Gastrocnemius medialis (tissue), 4 donors: ENCODE measurements at regions of chrX and their contacts with region 1.

Region 1: GRCh38 chrX:154490414-154491083 is at the start of gene SLC10A3:
- DNase-seq: peak; percentile 84 to 91
- ATAC-seq: peak; percentile 79
- H3K4me3 ChIP-seq: peak within 1 kb of the TSS; percentile 60 to 80 (median 67)
- H3K27ac ChIP-seq: peak within 1 kb of the TSS; percentile 89 to 95 (median 92)
- H3K4me1 ChIP-seq: peaks cover 2 to 13% of the 10 kb centered on the region in 2 donors
- H3K27me3 ChIP-seq: no peaks in the 10 kb centered on the region
- CTCF ChIP-seq: no peak
- POLR2A ChIP-seq: peak; percentile 93
- total RNA-seq, gene SLC10A3: 11.8 to 33.3 (median 21.0) TPM

Region 2: DNA sequence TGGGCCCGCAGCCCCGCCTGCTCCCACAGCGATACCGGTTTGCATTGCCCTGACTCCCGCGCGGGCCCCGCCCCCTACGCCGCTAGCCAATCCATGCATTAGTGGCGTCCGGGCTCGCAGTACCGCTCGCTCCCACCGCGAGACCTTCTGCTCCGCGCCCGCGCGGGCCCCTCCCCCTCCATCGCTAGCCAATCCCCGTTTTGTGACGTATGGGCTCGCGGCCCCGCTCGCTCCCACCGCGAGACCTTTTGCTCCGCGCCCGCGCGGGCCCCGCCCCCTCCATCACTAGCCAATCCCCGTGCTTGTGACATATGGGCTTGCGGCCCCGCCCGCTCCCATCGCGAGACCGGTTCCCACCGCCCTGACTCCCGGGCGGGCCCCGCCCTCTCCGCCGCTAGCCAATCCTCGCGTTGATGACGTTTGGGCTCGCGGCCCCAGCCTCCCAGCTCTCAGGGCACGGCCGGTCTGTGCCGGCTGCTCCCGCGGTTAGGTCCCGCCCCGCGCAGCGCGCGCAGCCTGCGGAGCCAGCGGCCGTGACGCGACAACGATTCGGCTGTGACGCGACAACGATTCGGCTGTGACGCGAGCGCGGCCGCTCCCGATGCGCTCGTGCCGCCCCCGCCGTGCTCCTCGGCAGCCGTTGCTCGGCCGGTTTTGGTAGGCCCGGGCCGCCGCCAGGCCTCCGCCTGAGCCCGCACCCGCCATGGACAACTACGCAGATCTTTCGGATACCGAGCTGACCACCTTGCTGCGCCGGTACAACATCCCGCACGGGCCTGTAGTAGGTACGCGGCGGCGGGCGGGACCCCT is 111.6 kb before region 1 on chrX and contains the start of gene EMD:
- in situ Hi-C with region 1: no loop called
- intact Hi-C with region 1: no loop called
- DNase-seq: peak; percentile 95 to 98
- ATAC-seq: peak; percentile 79 to 84
- H3K4me3 ChIP-seq: peak within 1 kb of the TSS; percentile 67 to 84 (median 69)
- H3K27ac ChIP-seq: peak within 1 kb of the TSS; percentile 87 to 99 (median 96)
- H3K4me1 ChIP-seq: peaks cover 5 to 13% of the 10 kb centered on the region in 2 donors
- H3K27me3 ChIP-seq: no peaks in the 10 kb centered on the region
- CTCF ChIP-seq: peak in 1 of 5 experiments; percentile 5
- POLR2A ChIP-seq: peak; percentile 89 to 93
- total RNA-seq, gene EMD: 36.2 to 61.5 (median 53.2) TPM

Region 3: GRCh38 chrX:154397819-154398724 is 92.5 kb before region 1 on chrX and contains the start of gene RPL10:
- in situ Hi-C with region 1: no loop called
- intact Hi-C with region 1: loop called (anchors 5 kb)
- DNase-seq: peak; percentile 92 to 96
- ATAC-seq: peak; percentile 83 to 91
- H3K4me3 ChIP-seq: peak within 1 kb of the TSS; percentile 68 to 85 (median 80)
- H3K27ac ChIP-seq: peak within 1 kb of the TSS; percentile 93 to 99 (median 98)
- H3K4me1 ChIP-seq: peaks cover 10 to 18% of the 10 kb centered on the region in 2 donors
- H3K27me3 ChIP-seq: no peaks in the 10 kb centered on the region
- CTCF ChIP-seq: no peak
- POLR2A ChIP-seq: peak; percentile 87 to 91
- total RNA-seq, gene RPL10: 3,899 to 6,066 (median 5,720) TPM

Region 4: GRCh38 chrX:154411322-154411980 is 79.1 kb before region 1 on chrX and contains the start of gene TAFAZZIN:
- in situ Hi-C with region 1: no loop called
- intact Hi-C with region 1: loop called (anchors 5 kb)
- DNase-seq: peak; percentile 59 to 72
- ATAC-seq: peak; percentile 44 to 50
- H3K4me3 ChIP-seq: peak within 1 kb of the TSS; percentile 67 to 90 (median 78)
- H3K27ac ChIP-seq: peak within 1 kb of the TSS; percentile 91 to 98 (median 98)
- H3K4me1 ChIP-seq: peaks cover 12 to 32% of the 10 kb centered on the region in 2 donors
- H3K27me3 ChIP-seq: no peaks in the 10 kb centered on the region
- CTCF ChIP-seq: no peak
- POLR2A ChIP-seq: peak; percentile 71 to 82
- total RNA-seq, gene TAFAZZIN: 17.6 to 28.3 (median 20.1) TPM

Region 5: DNA sequence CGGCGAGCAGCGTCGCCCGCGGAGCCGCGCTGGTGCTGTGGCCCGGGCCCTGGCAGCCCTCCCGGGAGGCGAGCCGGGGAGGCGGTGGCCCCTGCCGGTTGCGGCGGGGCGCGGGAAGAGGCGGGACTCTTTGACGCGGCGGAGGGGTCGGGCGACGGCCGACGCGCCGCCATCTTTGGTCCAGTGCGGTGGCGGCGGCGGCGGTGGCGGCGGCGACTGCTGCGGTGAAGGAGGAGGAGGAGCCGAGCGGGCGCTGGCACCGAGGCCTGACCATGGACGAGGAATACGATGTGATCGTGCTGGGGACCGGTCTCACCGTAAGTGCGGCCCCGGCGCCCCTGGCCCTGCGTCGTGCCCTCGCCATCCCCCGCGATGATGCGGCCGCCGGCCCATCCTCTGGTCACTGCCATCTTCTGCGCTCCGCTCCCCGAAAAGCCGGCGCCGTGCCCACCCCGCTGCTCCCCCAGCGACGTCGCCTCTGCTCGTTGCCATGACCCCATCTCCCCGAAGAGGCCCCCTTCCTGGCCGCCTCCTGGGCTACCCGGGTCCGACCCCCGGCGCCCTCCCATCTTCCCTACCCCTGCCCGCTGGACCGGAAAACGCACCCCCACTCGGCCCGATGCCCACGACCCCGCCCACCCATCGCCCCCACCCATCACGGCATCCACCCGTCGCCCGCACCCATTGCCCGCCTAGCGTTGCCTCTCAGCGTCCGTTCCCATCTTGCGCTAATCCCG is 53.4 kb before region 1 on chrX and contains the start of gene GDI1:
- in situ Hi-C with region 1: no loop called
- intact Hi-C with region 1: loop called (anchors 2 kb)
- DNase-seq: peak in 1 of 2 donors; percentile 36
- ATAC-seq: peak; percentile 72 to 75
- H3K4me3 ChIP-seq: peak within 1 kb of the TSS; percentile 64 to 84 (median 66)
- H3K27ac ChIP-seq: peak within 1 kb of the TSS; percentile 79 to 88 (median 82)
- H3K4me1 ChIP-seq: peaks cover 0 to 5% of the 10 kb centered on the region in 2 donors
- H3K27me3 ChIP-seq: no peaks in the 10 kb centered on the region
- CTCF ChIP-seq: no peak
- POLR2A ChIP-seq: peak; percentile 49 to 62
- total RNA-seq, gene GDI1: 19.8 to 54.5 (median 39.0) TPM

Region 6: GRCh38 chrX:154515878-154516655 is 25.5 kb after region 1 on chrX and contains the start of gene FAM3A:
- in situ Hi-C with region 1: no loop called
- intact Hi-C with region 1: loop called (anchors 1 kb)
- DNase-seq: peak; percentile 93
- ATAC-seq: peak; percentile 86 to 92
- H3K4me3 ChIP-seq: peak within 1 kb of the TSS; percentile 68 to 89 (median 72)
- H3K27ac ChIP-seq: peak within 1 kb of the TSS; percentile 88 to 96 (median 95)
- H3K4me1 ChIP-seq: peaks cover 0 to 12% of the 10 kb centered on the region in 2 donors
- H3K27me3 ChIP-seq: no peaks in the 10 kb centered on the region
- CTCF ChIP-seq: no peak
- POLR2A ChIP-seq: peak; percentile 88 to 89
- total RNA-seq, gene FAM3A: 28.3 to 44.5 (median 37.8) TPM

Region 7: DNA sequence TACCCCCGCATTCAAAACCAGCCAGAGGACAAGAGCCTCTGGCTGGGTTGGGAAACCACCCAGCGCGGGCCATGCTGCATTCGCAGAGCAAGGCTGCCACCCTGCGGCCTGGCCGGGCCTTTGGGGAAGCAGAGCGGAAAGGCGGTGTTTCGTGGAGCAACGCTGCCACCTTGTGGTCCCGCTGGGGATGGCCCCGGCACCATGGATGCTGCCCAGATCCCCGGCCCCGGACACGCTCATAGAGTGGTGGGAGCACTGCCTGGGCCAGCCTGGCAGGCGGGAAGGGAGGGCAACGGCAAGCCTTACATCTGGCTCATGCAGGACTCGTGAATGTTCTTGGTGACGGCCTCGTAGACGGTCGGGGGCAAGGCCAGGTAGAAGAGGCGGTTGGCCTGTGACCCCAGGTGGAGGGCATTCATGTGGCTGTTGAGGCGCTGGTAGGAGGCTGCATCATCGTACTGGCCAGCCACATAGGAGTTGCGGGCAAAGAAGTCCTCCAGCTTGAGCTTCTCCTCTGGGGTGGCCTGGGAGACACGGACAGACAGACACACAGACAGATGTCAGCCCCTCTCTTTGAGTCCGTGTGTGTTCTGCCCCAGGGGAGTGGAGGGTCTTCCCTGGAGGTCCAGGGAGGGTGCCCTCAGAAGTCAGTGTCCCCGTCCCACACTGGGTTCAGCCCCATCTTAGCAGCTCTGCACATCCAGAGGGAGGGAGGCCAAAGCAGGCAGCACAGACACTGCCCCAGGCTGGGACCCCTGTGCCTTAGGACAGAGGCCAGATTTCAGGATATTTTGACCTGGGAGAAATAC is 44.5 kb after region 1 on chrX:
- in situ Hi-C with region 1: no loop called
- intact Hi-C with region 1: loop called (anchors 5 kb)
- DNase-seq: peak; percentile 60 to 80
- ATAC-seq: peak; percentile 94 to 97
- H3K4me3 ChIP-seq: no peak overlapping the region
- H3K27ac ChIP-seq: peak overlapping the region in 3 of 4 donors; percentile 19 to 64 (median 64)
- H3K4me1 ChIP-seq: peaks cover 0 to 8% of the 10 kb centered on the region in 2 donors
- H3K27me3 ChIP-seq: no peaks in the 10 kb centered on the region
- CTCF ChIP-seq: peak; percentile 94 to 99 (median 98)
- POLR2A ChIP-seq: no peak

Region 8: GRCh38 chrX:154804957-154805695 is 314.6 kb after region 1 on chrX and contains the start of gene MPP1:
- in situ Hi-C with region 1: no loop called
- intact Hi-C with region 1: no loop called
- DNase-seq: peak; percentile 41 to 64
- ATAC-seq: peak; percentile 87 to 88
- H3K4me3 ChIP-seq: peak within 1 kb of the TSS; percentile 68 to 92 (median 69)
- H3K27ac ChIP-seq: peak within 1 kb of the TSS; percentile 61 to 83 (median 80)
- H3K4me1 ChIP-seq: peaks cover 0 to 12% of the 10 kb centered on the region in 2 donors
- H3K27me3 ChIP-seq: no peaks in the 10 kb centered on the region
- CTCF ChIP-seq: no peak
- POLR2A ChIP-seq: peak in 1 of 2 donors; percentile 41
- total RNA-seq, gene MPP1: 11.3 to 19.9 (median 15.9) TPM